ENCODE measurements at regions of chr9 and their contacts with region 1.

Region 1: GRCh38 chr9:113401027-113401792 is at the start of gene ALAD:
- DNase-seq: peak; percentile 98
- H3K4me3 Mint-ChIP-seq: peak within 1 kb of the TSS; percentile 97
- H3K27ac Mint-ChIP-seq: peak within 1 kb of the TSS; percentile 82
- H3K4me1 Mint-ChIP-seq: peaks cover 12% of the 10 kb centered on the region
- H3K27me3 Mint-ChIP-seq: no peaks in the 10 kb centered on the region
- CTCF ChIP-seq: peak; percentile 86
- total RNA-seq, gene ALAD: 6.6 and 7.8 TPM in 2 replicates

Region 2: GRCh38 chr9:113349445-113350094 is 51.6 kb before region 1 on chr9 and contains the start of gene BSPRY:
- CTCF ChIA-PET with region 1: interaction called, 10 read pairs
- POLR2A ChIA-PET with region 1: interaction called, 5 read pairs
- intact Hi-C with region 1: no loop called
- DNase-seq: no peak
- H3K4me3 Mint-ChIP-seq: peak within 1 kb of the TSS; percentile 60
- H3K27ac Mint-ChIP-seq: no peak within 1 kb of the TSS
- H3K4me1 Mint-ChIP-seq: no peaks in the 10 kb centered on the region
- H3K27me3 Mint-ChIP-seq: peaks cover 22% of the 10 kb centered on the region
- CTCF ChIP-seq: no peak
- total RNA-seq, gene BSPRY: 0.17 and 0.21 TPM in 2 replicates

Region 3: DNA sequence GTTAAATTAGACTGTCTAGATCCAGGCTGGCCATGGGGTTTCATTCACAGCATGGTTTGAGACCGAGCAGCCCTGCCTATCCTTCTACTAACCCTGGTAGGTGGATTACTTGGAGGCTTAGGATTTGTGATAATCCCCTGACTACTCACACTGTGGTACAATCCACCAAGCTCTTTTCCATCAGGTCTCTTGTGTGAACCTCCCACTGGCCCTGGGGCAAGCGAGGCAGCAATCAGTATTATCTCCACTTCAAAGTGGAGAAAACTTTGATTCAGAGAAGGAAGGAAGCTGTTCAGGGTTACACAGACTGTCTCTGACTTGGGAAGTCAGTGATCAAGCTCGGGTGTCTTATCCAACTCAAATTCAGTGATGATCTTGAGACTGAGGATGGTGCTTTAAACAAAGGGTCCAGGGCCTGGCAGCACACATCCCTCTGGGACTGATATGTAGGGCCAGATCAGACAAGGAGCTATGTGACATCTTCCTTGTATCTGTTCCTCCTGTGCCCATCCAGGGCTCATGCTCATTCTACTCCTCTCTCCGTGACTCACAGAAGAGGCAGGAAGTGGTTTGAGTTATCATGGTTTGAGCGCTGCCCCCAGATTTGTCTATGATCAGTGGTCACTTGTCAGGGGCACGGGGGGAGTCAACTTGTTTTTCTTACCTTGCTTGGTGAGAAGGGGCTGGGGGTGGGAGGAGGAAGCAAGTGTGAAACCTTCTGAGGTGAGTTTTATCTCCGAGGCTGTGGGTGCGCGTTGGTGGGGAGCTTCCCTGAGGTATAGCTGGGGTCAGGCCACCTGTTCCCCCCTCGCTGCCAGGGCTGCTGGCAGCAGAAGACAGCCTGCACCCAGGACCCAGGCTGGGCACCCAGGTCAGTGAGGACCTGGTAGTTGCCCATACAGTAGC is 110.9 kb after region 1 on chr9:
- CTCF ChIA-PET with region 1: no interaction called
- POLR2A ChIA-PET with region 1: no interaction called
- intact Hi-C with region 1: no loop called
- DNase-seq: no peak
- H3K4me3 Mint-ChIP-seq: no peak overlapping the region
- H3K27ac Mint-ChIP-seq: no peak overlapping the region
- H3K4me1 Mint-ChIP-seq: peaks cover 5% of the 10 kb centered on the region
- H3K27me3 Mint-ChIP-seq: no peaks in the 10 kb centered on the region
- CTCF ChIP-seq: no peak

Measured in MCF 10A (cell line).